Ascending aorta (tissue), 2 donors: ENCODE measurements at regions of chr1 and their contacts with region 1.

Region 1: DNA sequence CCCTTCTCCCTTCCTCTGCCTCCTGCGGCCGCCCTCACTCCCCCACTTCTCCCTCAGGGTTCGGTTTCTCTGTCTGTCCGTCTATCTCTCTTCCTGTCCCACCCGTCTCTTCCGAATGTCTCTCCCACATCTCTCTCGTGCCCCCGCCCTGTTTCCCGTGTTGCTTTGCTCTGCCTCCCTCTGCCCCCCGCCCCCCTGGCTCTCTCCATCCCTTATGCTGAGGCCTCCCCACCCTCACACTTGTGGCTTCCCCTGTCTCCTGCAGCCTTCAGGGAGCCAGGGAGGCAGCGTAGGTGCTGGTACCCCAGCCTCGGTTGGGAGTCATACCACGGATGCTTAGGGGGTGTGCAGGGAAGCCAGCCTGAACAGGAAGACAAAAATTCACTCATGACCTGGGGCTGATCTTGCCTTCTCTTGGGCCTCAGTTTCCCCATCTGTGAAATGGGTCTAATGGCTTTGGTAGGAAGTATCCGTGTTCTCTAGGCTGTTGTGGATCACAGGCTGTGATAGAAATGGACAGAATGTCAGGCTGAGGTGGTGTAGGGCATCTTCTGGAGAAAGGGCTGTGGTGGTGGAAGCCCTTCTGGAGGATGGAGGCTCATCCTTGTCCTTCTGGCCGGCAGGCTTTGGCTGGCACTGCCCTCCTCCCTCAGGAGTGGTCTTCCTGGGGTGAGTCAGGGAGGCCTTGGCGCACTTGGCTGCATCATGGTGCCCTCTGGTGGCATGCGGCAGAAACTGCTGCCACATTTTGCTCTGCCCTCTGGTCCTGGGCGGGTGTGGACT is 55.5 kb downstream of the FOXO6 start:
- DNase-seq: peak in 1 of 2 donors; percentile 85
- H3K4me3 ChIP-seq: no peak overlapping the region
- H3K27ac ChIP-seq: peak overlapping the region in 1 of 2 donors; percentile 88
- H3K4me1 ChIP-seq: peaks cover 4 to 12% of the 10 kb centered on the region in 2 donors
- H3K27me3 ChIP-seq: no peaks in the 10 kb centered on the region
- CTCF ChIP-seq: peak; percentile 90 to 97 (median 93)

Region 2: DNA sequence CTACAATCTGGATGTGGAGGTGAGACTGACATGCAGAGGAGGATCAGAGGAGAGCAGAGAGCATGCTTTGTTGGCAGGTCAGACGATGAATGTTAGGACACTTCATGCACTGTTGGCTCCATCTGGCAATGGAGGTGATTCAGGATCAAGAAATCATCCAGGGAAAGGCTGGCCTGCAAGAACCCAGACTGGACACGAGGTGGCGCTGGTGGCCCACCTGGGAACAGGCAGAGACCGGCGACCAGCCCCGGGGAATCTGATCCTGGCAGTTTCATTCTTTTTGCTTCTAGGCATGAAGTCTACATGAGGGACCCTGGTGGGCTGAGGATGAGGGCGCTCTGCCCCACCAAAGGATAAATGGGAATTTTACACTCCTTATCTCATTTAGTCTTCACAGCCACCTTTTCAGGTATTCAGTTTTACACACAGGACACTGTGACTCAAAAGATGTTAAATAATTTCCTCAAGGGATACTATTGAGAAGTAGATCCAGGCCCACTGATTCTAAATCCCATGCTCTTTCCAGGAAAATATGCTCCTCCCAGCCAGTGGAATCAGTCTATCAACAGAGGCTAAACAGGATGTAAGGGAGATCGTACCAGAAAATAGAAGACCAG is 148.5 kb before region 1 on chr1:
- intact Hi-C with region 1: loop called (anchors 1 kb)
- DNase-seq: peak in 1 of 2 donors; percentile 86
- H3K4me3 ChIP-seq: no peak overlapping the region
- H3K27ac ChIP-seq: no peak overlapping the region
- H3K4me1 ChIP-seq: no peaks in the 10 kb centered on the region
- H3K27me3 ChIP-seq: no peaks in the 10 kb centered on the region
- CTCF ChIP-seq: peak; percentile 91 to 98 (median 97)

Region 3: DNA sequence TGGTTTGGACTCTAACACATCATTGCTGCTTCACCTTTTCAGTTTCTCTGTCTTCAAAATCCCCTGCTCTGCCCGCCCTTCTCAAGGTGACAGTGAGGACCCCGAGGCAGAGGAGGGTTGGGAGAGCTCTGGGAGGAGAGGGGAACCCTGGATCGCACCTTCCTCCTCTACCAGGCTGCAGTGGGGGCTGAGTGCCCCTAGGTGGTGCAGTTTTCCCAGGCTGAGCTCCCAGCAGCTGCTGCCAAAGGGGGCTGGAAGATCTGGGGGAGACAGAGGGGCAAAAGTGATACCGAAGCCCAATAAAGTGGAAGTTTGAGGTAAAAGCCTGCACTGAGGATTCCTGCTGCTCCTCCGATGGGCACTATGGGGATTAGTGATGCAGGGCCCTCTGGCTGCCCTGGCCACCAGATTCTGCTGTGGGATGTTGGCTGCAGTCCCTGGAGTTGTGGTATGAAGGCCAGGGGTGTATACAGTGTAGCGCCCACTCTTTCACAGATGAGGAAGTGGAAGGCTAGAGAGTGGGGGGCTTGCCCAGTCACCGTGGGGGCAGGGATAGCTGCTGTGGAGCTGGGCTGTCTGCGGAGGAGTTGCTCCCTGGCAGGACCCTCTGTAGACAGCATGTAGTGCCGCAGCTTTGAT is 133.9 kb before region 1 on chr1:
- intact Hi-C with region 1: loop called (anchors 1 kb)
- DNase-seq: no peak
- H3K4me3 ChIP-seq: no peak overlapping the region
- H3K27ac ChIP-seq: no peak overlapping the region
- H3K4me1 ChIP-seq: peaks cover 0 to 2% of the 10 kb centered on the region in 2 donors
- H3K27me3 ChIP-seq: no peaks in the 10 kb centered on the region
- CTCF ChIP-seq: peak; percentile 64 to 82 (median 81)

Region 4: GRCh38 chr1:41381692-41382477 is 34.9 kb before region 1 on chr1:
- intact Hi-C with region 1: loop called (anchors 1 kb)
- DNase-seq: peak in 1 of 2 donors; percentile 81
- H3K4me3 ChIP-seq: peak overlapping the region; percentile 65 to 71
- H3K27ac ChIP-seq: peak overlapping the region; percentile 98
- H3K4me1 ChIP-seq: peaks cover 12 to 16% of the 10 kb centered on the region in 2 donors
- H3K27me3 ChIP-seq: no peaks in the 10 kb centered on the region
- CTCF ChIP-seq: no peak

Region 5: GRCh38 chr1:41432481-41433280 is 15.9 kb after region 1 on chr1:
- intact Hi-C with region 1: loop called (anchors 1 kb)
- DNase-seq: peak; percentile 52 to 96
- H3K4me3 ChIP-seq: peak overlapping the region; percentile 0 to 13
- H3K27ac ChIP-seq: peak overlapping the region; percentile 46 to 63
- H3K4me1 ChIP-seq: peaks cover 23 to 32% of the 10 kb centered on the region in 2 donors
- H3K27me3 ChIP-seq: no peaks in the 10 kb centered on the region
- CTCF ChIP-seq: peak; percentile 90 to 98 (median 97)

Region 6: DNA sequence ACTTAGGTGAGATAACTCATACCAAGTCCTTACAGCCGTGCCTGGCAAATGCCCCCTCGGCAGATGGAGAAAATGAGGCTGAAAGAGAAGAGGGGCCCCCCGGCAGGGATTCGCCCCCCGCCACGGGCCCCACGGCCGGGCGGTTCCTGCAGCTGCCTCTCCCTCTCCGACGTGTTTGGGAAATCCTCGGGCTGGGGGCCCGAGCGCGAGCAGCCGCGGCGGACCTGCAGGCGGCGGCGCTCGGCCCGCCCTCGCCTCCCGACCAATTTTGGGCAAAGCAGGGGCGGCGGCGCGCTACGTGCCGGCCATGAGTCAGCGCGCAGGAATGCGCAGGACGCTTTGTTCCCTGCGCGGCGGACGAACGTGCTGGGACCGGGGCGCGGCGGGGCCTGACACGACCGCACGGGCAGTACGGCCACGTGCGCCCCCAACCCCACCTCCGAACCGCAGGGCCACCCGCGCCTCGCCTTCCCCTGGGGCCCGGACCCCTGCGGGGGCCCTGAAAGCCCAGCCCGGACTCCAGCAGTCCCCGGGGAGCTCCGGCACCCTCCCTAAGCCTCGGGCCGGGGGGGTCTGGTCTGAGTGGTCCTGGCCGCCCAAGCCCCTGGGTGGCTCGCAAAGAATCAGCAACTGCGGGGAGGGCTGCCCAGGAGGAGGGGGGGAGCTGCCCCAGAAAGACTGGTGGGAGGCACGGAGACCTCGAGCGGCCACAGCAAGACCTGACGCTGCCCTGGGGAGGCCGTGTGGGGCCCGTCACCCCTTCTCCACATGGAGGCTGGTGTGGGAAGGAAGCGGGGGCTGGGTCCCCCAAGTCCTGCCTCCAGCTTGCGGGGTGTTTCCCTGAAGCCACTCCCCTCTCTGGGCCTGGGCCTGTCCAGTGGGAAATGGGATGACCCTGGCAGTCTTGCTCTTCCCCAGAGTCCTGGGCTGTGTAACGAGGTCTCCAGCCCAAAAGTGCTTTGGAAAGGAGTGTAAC is 79.6 kb after region 1 on chr1:
- intact Hi-C with region 1: loop called (anchors 5 kb)
- DNase-seq: peak; percentile 61 to 95
- H3K4me3 ChIP-seq: peak overlapping the region; percentile 24 to 43
- H3K27ac ChIP-seq: peak overlapping the region; percentile 93 to 97
- H3K4me1 ChIP-seq: peaks cover 27 to 69% of the 10 kb centered on the region in 2 donors
- H3K27me3 ChIP-seq: no peaks in the 10 kb centered on the region
- CTCF ChIP-seq: peak in 2 of 3 experiments; percentile 20 to 37

Region 7: DNA sequence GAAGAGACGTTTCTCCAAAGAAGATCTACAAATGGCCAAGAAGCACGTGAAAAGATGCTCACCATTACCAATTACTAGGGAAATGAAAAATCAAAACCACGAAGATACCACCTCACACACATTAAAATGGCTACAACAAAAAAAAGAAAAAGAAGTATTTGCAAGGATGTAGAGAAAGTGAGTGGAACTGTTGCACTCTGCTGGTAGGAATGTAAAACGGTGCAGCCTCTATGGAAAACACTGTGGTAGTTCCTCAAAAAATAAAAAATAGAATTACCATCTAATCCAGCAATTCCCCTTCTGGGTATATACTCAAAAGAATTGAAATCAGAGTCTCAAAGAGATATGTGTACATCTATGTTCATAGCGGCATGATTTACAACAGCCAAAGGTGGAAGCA is 183.2 kb after region 1 on chr1:
- intact Hi-C with region 1: no loop called
- DNase-seq: no peak
- H3K4me3 ChIP-seq: no peak overlapping the region
- H3K27ac ChIP-seq: no peak overlapping the region
- H3K4me1 ChIP-seq: no peaks in the 10 kb centered on the region
- H3K27me3 ChIP-seq: no peaks in the 10 kb centered on the region
- CTCF ChIP-seq: peak in 2 of 3 experiments; percentile 35 to 42